GM10248 (cell line): ENCODE measurements at regions of chr20 and their contacts with region 1.

Region 1: GRCh38 chr20:46363800-46364634 is 42.4 kb downstream of the ELMO2 start:
- DNase-seq: peak; percentile 94
- CTCF ChIP-seq: no peak

Region 2: DNA sequence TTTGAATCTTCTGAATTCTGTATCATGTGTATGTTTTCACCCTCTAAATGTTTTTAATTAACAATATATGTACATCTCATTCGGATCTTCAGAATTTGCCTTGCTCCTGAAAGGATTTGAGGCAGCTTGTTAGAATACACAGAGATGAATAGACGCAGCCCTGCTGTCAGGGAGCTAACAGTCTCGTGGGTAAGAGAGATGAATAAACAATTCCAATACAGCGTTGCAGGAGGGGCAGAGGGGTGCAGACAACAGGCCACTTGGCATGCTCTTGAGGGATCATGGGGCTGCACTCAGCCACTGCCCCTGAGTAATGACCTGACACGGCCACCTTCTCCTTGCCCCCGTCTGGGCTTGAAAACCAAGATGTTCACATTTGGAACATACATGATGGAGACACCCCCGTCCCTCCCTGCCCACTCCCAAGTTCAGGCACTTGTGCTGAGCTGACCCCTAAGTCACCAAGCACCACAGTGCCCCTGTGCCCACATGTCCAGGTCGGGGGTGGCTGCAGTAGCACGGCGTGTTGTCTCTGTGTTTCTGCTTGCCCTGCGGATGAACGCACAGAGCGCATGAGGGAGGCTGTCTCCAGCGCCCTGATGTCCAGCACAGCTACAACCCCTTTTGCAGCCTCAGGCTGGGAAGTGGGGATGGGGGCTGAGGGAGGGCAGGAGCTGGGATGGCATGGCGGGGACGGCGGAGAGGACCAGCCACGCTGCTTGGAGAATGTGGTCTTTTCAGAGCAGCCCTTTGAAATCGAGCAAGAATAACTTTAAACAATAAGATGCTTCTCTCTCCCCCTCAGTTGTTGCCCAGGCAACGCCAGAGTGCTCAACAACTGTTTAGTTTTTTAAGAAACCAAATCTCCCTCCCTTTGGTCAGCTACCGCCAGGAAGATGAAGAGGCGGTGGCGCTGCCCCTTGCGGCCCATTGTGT is 22.7 kb before region 1 on chr20:
- CTCF ChIA-PET with region 1: no interaction called
- POLR2A ChIA-PET with region 1: no interaction called
- DNase-seq: no peak
- CTCF ChIP-seq: no peak

Region 3: GRCh38 chr20:46374383-46374782 is 10.4 kb after region 1 on chr20:
- CTCF ChIA-PET with region 1: interaction called, 5 read pairs
- POLR2A ChIA-PET with region 1: interaction called, 10 read pairs
- DNase-seq: no peak
- CTCF ChIP-seq: no peak

Region 4: DNA sequence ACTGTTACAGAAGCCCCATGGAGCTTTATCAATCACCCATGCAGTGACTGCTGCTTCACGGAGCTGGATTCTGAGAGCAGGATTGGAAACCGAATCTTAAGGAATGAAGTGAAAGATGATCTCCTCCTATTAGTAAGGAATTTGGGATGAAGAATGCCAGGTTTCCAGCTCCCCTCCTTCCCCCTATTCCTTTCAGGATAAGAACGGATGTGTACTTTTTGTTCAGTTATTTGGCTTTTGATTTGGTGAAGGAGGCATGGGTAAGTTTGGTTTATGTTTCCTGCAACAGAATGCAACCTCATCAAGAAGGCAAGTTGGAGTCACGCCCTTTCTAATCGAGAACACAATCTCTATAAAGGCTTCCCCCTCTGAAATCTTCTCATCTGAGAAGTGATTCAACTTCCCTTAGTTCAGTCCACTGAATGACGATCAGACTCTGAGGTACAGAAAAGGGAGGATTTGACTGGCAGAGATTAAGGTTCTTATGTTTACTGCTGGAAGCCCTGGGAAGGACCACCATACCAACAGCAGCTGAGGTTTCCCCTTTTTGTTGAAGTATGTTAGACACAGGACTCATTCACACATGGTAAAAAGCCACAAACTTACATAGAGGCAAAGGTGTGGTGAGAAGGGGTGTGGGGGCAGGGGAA is 36.9 kb after region 1 on chr20:
- CTCF ChIA-PET with region 1: interaction called, 13 read pairs
- POLR2A ChIA-PET with region 1: interaction called, 17 read pairs
- DNase-seq: no peak
- CTCF ChIP-seq: no peak

Region 5: GRCh38 chr20:46406199-46406985 is 42.4 kb after region 1 on chr20 and contains the start of gene ELMO2:
- CTCF ChIA-PET with region 1: interaction called, 13 read pairs
- POLR2A ChIA-PET with region 1: interaction called, 17 read pairs
- DNase-seq: peak; percentile 94
- CTCF ChIP-seq: no peak